Panc1 (cell line): ENCODE measurements at regions of chr11 and their contacts with region 1.

Region 1: DNA sequence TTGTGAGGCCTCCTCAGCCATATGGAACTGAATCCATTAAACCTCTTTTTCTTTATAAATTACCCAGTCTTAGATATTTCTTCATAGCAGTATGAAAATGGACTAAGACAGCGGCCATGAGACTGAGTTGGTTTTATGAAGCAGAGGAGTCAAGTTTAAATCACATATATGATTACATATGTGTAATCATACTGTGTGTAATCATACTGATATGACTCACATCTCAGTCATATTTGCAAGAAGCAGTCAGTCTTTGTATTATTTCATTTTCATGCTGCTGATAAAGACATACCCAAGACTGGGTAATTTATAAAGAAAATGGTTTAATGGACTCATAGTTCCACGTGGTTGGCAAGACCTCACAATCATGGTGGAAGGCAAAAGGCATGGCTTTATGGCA is 89.8 kb downstream of the SYT9 start:
- DNase-seq: no peak
- ATAC-seq: no peak
- H3K4me3 ChIP-seq: no peak overlapping the region
- H3K27ac ChIP-seq: no peak overlapping the region
- H3K4me1 ChIP-seq: no peaks in the 10 kb centered on the region
- H3K27me3 ChIP-seq: no peaks in the 10 kb centered on the region
- CTCF ChIP-seq: no peak

Region 2: DNA sequence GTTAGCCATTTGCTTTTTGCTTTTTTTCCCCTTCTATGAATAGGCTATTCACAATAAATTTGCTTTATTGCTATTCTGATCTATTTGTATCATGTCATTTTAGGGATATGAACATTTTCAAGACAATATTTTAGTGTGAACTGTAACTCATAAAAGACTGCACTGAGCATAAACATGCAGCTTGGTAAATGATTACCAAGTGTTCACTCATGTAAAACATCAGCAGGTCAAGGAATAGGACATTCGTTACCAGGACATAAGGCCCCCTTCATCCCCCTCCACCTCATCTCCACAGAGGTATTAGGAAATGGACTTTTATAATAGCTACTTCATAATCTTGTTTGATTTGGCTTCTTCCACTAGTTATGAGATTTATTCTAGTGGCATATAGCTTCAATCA is 308.9 kb before region 1 on chr11:
- CTCF ChIA-PET with region 1: no interaction called
- POLR2A ChIA-PET with region 1: no interaction called
- in situ Hi-C with region 1: no loop called
- intact Hi-C with region 1: no loop called
- DNase-seq: no peak
- ATAC-seq: no peak
- H3K4me3 ChIP-seq: no peak overlapping the region
- H3K27ac ChIP-seq: no peak overlapping the region
- H3K4me1 ChIP-seq: no peaks in the 10 kb centered on the region
- H3K27me3 ChIP-seq: peaks cover 38% of the 10 kb centered on the region
- CTCF ChIP-seq: no peak

Region 3: DNA sequence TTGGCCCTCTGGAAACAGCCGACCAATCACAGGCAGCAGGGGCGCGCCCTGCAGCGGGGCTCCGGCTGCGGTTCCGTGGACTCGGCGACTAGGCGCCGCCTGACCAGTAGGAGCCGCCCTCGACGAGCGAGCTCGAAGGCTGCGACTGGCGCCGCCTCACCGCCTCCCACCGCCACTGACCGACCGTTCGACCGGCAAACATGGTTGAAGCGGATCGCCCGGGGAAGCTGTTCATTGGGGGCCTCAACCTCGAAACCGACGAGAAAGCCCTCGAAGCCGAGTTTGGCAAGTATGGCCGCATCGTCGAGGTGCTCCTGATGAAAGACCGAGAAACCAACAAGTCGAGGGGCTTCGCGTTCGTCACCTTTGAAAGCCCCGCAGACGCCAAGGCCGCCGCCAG is 252.6 kb before region 1 on chr11 and contains the start of gene RBMXL2:
- CTCF ChIA-PET with region 1: no interaction called
- POLR2A ChIA-PET with region 1: no interaction called
- in situ Hi-C with region 1: no loop called
- intact Hi-C with region 1: no loop called
- DNase-seq: no peak
- ATAC-seq: no peak
- H3K4me3 ChIP-seq: no peak within 1 kb of the TSS
- H3K27ac ChIP-seq: no peak within 1 kb of the TSS
- H3K4me1 ChIP-seq: no peaks in the 10 kb centered on the region
- H3K27me3 ChIP-seq: peaks cover 36% of the 10 kb centered on the region; the same call in 1 of the 2 replicates
- CTCF ChIP-seq: no peak
- total RNA-seq, gene RBMXL2: 0.10 TPM

Region 4: GRCh38 chr11:7307836-7308235 is 33.7 kb before region 1 on chr11:
- CTCF ChIA-PET with region 1: no interaction called
- POLR2A ChIA-PET with region 1: no interaction called
- in situ Hi-C with region 1: loop called (anchors 5 kb)
- intact Hi-C with region 1: no loop called
- DNase-seq: no peak
- ATAC-seq: no peak
- H3K4me3 ChIP-seq: no peak overlapping the region
- H3K27ac ChIP-seq: no peak overlapping the region
- H3K4me1 ChIP-seq: no peaks in the 10 kb centered on the region
- H3K27me3 ChIP-seq: no peaks in the 10 kb centered on the region
- CTCF ChIP-seq: no peak